ENCODE measurements at regions of chr7 and their contacts with region 1.

Region 1: GRCh38 chr7:41035794-41036193 is 667.1 kb downstream of the INHBA start:
- DNase-seq: no peak
- ATAC-seq: peak; percentile 60
- H3K4me3 ChIP-seq: no peak overlapping the region
- H3K27ac ChIP-seq: no peak overlapping the region
- H3K4me1 ChIP-seq: no peaks in the 10 kb centered on the region
- H3K27me3 ChIP-seq: no peaks in the 10 kb centered on the region
- CTCF ChIP-seq: no peak
- EP300 ChIP-seq: no peak
- POLR2A ChIP-seq: no peak
- RAD21 ChIP-seq: no peak

Region 2: GRCh38 chr7:41003031-41003925 is 32.5 kb before region 1 on chr7:
- CTCF ChIA-PET with region 1: interaction called, 12 read pairs
- POLR2A ChIA-PET with region 1: no interaction called
- RAD21 ChIA-PET with region 1: no interaction called
- SMC1A ChIA-PET with region 1: interaction called, 5 read pairs
- in situ Hi-C with region 1: no loop called
- intact Hi-C with region 1: no loop called
- DNase-seq: peak; percentile 3
- ATAC-seq: peak; percentile 67
- H3K4me3 ChIP-seq: no peak overlapping the region
- H3K27ac ChIP-seq: no peak overlapping the region
- H3K4me1 ChIP-seq: no peaks in the 10 kb centered on the region
- H3K27me3 ChIP-seq: no peaks in the 10 kb centered on the region; a peak in 1 of 4 replicates
- CTCF ChIP-seq: peak; percentile 69 to 76 (median 71); a peak in 5 of 6 replicates
- EP300 ChIP-seq: no peak
- POLR2A ChIP-seq: no peak
- RAD21 ChIP-seq: peak; percentile 79